Vagina (tissue), 2 donors: ENCODE measurements at regions of chr1 and their contacts with region 1.

Region 1: DNA sequence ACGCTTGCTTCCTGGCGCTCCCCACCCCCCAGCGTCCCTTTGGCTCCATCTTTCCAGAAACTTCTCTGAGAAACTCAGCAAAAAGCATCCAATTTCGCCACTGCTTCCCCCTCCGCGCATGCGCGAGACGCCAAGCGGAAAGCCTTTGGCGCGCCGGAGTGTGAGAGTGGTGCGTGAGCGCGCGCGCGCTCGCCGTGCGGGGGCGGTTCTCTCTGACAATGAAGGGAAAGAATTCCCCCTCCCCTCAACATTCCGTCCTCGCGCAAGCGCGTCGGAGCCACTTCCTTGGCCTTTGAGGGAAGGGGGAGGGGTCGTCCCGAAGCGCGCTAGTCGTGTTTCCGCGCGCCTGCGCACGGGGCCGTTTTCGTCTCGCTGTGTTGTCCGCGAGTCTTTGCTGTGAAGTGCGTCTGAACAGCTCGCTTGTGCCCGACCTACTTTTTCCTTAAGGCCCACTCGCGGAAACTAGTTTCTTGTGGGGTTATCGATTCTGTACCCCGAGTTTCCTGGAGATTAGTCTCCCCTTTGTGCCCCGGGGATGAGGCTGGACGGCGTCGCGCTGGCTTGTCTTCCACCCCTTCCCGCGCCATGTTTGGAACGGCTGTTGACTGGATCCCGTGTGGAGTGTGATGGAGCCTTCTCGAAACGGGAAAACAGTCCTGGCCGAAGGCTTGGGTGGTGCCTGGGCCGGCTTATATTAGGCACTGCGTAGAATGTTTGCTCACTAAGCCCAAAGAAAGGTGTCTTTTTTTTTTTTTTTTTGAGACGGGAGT is 11.6 kb upstream of the SPEN start:
- DNase-seq: peak; percentile 99
- H3K4me3 ChIP-seq: peak overlapping the region; percentile 74 to 75
- H3K27ac ChIP-seq: peak overlapping the region; percentile 100
- H3K4me1 ChIP-seq: peaks cover 37% of the 10 kb centered on the region
- H3K27me3 ChIP-seq: no peaks in the 10 kb centered on the region
- CTCF ChIP-seq: no peak
- POLR2A ChIP-seq: peak in 1 of 2 donors; percentile 83

Region 2: DNA sequence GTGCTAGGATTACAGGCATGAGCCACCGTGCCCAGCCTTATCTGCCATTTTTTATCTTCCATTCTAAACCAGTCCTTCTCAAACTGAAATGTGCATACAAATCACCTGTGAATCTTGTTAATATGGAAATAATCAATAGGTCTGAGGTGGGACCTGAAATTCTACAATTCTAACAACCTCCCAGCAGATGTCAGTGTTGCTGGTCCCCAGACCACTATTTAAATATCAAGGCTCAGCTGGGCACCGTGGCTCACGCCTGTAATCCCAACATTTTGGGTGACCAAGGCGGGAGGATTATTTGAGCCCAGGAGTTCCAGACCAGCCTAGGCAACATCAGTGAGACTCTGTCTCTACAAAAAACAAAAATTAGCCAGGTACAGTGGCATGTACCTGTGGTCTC is 32.6 kb before region 1 on chr1:
- intact Hi-C with region 1: loop called (anchors 2 kb)
- DNase-seq: no peak
- H3K4me3 ChIP-seq: no peak overlapping the region
- H3K27ac ChIP-seq: no peak overlapping the region
- H3K4me1 ChIP-seq: peaks cover 26% of the 10 kb centered on the region
- H3K27me3 ChIP-seq: no peaks in the 10 kb centered on the region
- CTCF ChIP-seq: peak in 1 of 3 experiments; percentile 22
- POLR2A ChIP-seq: no peak

Region 3: DNA sequence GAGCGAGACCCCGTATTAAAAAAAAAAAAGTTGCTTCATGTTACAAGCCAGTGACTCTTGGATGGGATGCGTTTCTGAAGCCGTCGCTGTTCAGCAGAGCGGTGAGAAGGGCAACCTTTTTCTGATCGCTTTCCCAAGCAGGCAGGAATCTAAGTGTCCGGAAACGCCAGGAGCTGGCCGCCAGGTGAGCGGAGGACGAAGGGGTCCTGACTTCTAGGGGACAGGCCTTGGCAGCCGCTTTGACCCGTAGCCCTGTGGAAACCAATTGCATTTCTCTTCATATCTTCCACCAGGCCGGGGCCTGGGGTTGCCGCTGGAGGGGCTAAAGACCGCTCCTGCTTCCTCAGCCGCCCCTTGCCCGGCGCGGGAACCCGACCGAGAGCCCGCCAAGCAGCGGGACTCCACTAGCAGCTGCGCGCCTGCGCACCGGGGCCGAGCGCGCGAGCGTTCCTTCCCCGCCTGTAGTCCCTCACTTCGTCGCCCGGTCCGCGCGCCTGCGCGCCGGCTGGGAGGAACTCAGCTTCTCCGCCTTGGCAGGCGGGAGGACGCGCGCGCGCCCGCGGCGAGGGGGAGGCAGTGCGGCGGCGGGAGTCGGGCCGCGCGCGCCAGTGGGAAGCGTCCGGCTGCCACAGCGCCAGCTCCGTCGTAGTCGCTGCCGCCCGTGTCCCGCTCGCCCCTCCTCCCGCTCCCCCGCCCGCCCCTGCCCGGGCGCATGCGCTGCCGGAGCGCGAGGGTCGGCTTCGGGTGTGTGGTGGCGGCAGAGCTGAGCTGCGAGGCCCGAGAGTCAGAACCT is 11.4 kb after region 1 on chr1 and contains the start of gene SPEN:
- intact Hi-C with region 1: loop called (anchors 2 kb)
- DNase-seq: peak in 1 of 2 donors; percentile 96
- H3K4me3 ChIP-seq: peak within 1 kb of the TSS; percentile 94 to 99
- H3K27ac ChIP-seq: peak within 1 kb of the TSS; percentile 96
- H3K4me1 ChIP-seq: peaks cover 40% of the 10 kb centered on the region
- H3K27me3 ChIP-seq: no peaks in the 10 kb centered on the region
- CTCF ChIP-seq: peak in 1 of 3 experiments; percentile 16
- POLR2A ChIP-seq: peak in 1 of 2 donors; percentile 79
- total RNA-seq, gene SPEN: 55.2 TPM

Region 4: GRCh38 chr1:15885701-15886610 is 50.0 kb after region 1 on chr1:
- intact Hi-C with region 1: loop called (anchors 2 kb)
- DNase-seq: peak in 1 of 2 donors; percentile 98
- H3K4me3 ChIP-seq: peak overlapping the region; percentile 32 to 51
- H3K27ac ChIP-seq: peak overlapping the region; percentile 88
- H3K4me1 ChIP-seq: peaks cover 63% of the 10 kb centered on the region
- H3K27me3 ChIP-seq: no peaks in the 10 kb centered on the region
- CTCF ChIP-seq: no peak
- POLR2A ChIP-seq: no peak

Region 5: GRCh38 chr1:15949453-15950245 is 113.7 kb after region 1 on chr1:
- intact Hi-C with region 1: loop called (anchors 2 kb)
- DNase-seq: peak in 1 of 2 donors; percentile 99
- H3K4me3 ChIP-seq: peak overlapping the region; percentile 23 to 34
- H3K27ac ChIP-seq: peak overlapping the region; percentile 96
- H3K4me1 ChIP-seq: peaks cover 67% of the 10 kb centered on the region
- H3K27me3 ChIP-seq: no peaks in the 10 kb centered on the region
- CTCF ChIP-seq: no peak
- POLR2A ChIP-seq: peak in 1 of 2 donors; percentile 41